Right ventricle myocardium inferior (tissue), 1 donor: ENCODE measurements at regions of chr12 and their contacts with region 1.

Region 1: DNA sequence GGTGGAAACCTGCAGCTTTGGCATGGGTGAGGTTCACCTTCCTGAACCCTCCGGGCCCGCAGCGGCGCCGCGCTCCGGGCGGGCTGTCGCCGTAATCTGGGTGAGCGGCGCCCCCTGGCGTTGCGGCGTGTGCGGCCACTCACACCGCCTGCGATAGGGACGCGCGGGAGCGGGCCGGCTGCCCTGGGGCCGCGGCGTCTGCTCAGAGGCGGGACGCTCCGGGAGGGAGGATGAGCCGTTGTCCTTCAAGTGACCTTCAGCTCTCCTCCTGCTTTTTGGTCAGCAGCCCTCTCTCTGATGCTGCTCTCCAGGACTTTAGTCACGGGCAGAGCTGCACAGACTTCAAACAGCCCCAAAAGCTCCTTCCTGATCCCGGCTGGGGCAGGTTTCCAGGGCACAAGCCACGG is 211.7 kb upstream of the FKBP4 start:
- DNase-seq: peak; percentile 82
- ATAC-seq: peak; percentile 86

Region 2: DNA sequence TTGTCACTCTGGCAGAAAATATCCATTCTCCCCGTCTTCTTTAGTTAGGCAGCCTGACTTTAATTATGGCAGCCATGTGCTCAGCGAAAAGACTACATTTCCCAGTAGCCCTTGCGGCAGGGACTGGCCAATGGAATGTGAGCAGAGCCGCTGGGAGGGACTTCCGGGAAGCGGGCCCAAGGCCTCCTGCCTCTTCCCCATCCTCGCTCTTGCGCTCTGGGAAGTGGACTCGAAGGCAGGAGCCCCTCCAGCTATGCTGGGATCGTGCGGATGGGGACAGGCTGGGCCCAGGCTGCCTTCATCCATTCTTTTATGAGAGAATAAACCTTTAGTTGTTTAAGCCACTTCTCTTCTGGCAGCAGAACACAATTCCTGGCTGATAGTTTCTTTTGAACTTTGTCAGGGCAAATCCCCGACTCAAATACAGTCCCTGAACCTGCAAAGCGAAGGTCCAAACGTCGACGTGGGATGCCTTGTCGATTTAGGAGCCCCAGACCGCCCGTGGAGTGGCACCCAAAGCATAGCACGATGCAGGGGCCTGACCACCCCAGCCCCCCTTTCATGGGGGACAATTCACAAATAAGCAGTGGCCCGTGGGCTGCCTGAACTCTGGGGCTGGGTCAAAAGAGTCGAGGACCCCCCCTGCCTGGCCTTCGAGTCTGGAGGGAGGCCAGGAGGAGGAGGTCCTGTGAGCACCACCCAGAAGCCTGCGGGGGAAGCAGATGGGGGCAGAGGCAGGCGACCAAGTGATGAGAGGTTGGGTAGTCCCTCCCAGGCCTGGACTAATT is 778.4 kb before region 1 on chr12:
- intact Hi-C with region 1: loop called (anchors 5 kb)
- DNase-seq: peak; percentile 94
- ATAC-seq: peak; percentile 82

Region 3: GRCh38 chr12:2057041-2057794 is 525.9 kb before region 1 on chr12:
- intact Hi-C with region 1: loop called (anchors 5 kb)
- DNase-seq: no peak
- ATAC-seq: peak; percentile 17

Region 4: GRCh38 chr12:2358986-2359658 is 224.0 kb before region 1 on chr12:
- intact Hi-C with region 1: loop called (anchors 5 kb)
- DNase-seq: no peak
- ATAC-seq: no peak

Region 5: GRCh38 chr12:2395354-2395977 is 187.6 kb before region 1 on chr12:
- intact Hi-C with region 1: loop called (anchors 10 kb)
- DNase-seq: no peak
- ATAC-seq: no peak

Region 6: GRCh38 chr12:2494486-2495192 is 88.5 kb before region 1 on chr12:
- intact Hi-C with region 1: loop called (anchors 5 kb)
- DNase-seq: no peak
- ATAC-seq: peak; percentile 71